Heart left ventricle (tissue), 16 donors: ENCODE measurements at regions of chr11 and their contacts with region 1.

Region 1: GRCh38 chr11:35822815-35823495 is 120.9 kb upstream of the LDLRAD3 start:
- DNase-seq: no peak
- ATAC-seq: no peak
- H3K4me3 ChIP-seq: no peak overlapping the region
- H3K27ac ChIP-seq: no peak overlapping the region
- H3K4me1 ChIP-seq: peaks cover 0 to 31% (median 14%) of the 10 kb centered on the region in 12 donors
- H3K27me3 ChIP-seq: no peaks in the 10 kb centered on the region
- CTCF ChIP-seq: no peak
- POLR2A ChIP-seq: no peak

Region 2: DNA sequence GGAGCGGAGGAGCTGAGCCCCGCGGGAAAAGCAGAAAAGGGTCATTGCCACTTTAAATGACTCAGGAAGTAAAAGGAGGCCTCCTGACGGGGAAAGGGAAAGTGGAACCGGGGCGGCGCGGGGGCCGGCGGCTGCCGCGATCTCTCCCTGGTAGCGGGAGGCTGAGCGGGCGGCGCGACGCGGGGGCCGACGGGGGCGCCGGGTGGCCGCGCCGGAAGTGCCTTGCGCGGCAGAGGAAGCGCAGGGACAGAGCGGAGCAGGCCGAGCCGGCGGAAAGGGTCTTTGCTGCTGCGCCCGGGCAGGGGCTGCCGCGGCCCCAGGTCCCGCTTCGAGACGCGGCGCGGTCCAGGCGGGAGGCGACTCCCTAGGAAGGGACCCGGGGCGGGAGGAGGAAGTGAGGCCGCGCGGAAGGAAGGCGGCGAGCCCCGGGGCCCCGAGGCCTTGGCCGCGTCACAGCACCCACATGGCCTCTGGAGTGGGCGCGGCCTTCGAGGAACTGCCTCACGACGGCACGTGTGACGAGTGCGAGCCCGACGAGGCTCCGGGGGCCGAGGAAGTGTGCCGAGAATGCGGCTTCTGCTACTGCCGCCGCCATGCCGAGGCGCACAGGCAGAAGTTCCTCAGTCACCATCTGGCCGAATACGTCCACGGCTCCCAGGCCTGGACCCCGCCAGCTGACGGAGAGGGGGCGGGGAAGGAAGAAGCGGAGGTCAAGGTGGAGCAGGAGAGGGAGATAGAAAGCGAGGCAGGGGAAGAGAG is 160.1 kb before region 1 on chr11 and contains the start of gene TRIM44:
- intact Hi-C with region 1: loop called in 5 of 10 experiments (anchors 2 to 10 kb)
- DNase-seq: peak; percentile 87 to 92 (median 89)
- ATAC-seq: peak; percentile 91 to 97 (median 95)
- H3K4me3 ChIP-seq: peak within 1 kb of the TSS; percentile 56 to 92 (median 78)
- H3K27ac ChIP-seq: peak within 1 kb of the TSS; percentile 89 to 99 (median 96)
- H3K4me1 ChIP-seq: peaks cover 0 to 31% (median 21%) of the 10 kb centered on the region in 12 donors
- H3K27me3 ChIP-seq: peaks cover 0 to 2% (median 0%) of the 10 kb centered on the region in 9 donors
- CTCF ChIP-seq: no peak
- POLR2A ChIP-seq: peak in 1 of 2 donors; percentile 70
- total RNA-seq, gene TRIM44: 34.5 to 55.3 (median 48.0) TPM

Region 3: DNA sequence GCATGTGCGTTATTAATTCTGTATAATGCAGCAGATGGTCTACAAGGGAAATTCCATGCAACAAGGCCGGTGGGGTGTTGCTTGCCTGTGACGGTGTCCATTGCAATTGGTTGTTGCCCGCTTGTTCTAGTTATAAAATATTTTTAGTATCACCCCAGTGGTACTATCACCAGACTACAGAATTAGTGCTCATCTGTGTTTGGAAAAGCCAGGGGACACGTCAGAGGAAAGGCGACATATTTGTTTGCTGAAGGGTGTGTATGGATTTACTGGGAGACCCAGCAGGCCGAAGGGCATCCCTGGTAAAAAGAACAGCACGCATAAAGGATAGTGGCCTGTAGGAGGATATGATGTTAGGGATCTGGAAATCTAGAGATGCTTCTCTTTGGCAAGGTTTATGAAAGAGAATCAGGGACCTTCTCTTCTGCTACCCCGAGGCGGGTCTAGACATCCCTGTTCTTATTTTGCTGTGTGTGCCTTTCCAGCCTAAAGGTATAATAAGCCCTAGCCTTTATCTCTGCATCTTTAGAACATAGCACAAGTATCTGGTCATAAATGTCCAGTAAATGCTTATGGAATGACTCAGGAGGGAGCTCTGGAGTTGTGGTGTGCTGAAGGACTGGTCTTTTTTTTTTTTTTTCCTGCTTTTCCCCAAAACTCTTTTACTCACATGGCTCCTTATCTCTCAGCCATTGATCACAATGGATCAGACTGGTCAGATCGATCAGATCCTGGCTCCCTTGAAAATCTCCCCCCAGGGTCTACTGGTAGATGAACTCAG is 211.8 kb after region 1 on chr11:
- intact Hi-C with region 1: loop called in 2 of 10 experiments (anchors 10 kb)
- DNase-seq: no peak
- ATAC-seq: no peak
- H3K4me3 ChIP-seq: no peak overlapping the region
- H3K27ac ChIP-seq: no peak overlapping the region
- H3K4me1 ChIP-seq: peaks cover 0 to 25% (median 7%) of the 10 kb centered on the region in 12 donors
- H3K27me3 ChIP-seq: no peaks in the 10 kb centered on the region
- CTCF ChIP-seq: no peak
- POLR2A ChIP-seq: no peak

Region 4: GRCh38 chr11:36123346-36124101 is 300.6 kb after region 1 on chr11:
- intact Hi-C with region 1: loop called in 1 of 10 experiments (anchors 5 kb)
- DNase-seq: no peak
- ATAC-seq: no peak
- H3K4me3 ChIP-seq: no peak overlapping the region
- H3K27ac ChIP-seq: no peak overlapping the region
- H3K4me1 ChIP-seq: no peaks in the 10 kb centered on the region
- H3K27me3 ChIP-seq: peaks cover 0 to 8% (median 0%) of the 10 kb centered on the region in 9 donors
- CTCF ChIP-seq: no peak
- POLR2A ChIP-seq: no peak

Region 5: GRCh38 chr11:36478700-36479329 is 655.9 kb after region 1 on chr11:
- intact Hi-C with region 1: loop called in 2 of 10 experiments (anchors 10 kb)
- DNase-seq: peak in 1 of 5 donors; percentile 30
- ATAC-seq: peak in 3 of 4 donors; percentile 70 to 80 (median 78)
- H3K4me3 ChIP-seq: no peak overlapping the region
- H3K27ac ChIP-seq: no peak overlapping the region
- H3K4me1 ChIP-seq: peaks cover 0 to 17% (median 5%) of the 10 kb centered on the region in 12 donors
- H3K27me3 ChIP-seq: no peaks in the 10 kb centered on the region
- CTCF ChIP-seq: peak; percentile 25 to 77 (median 62)
- POLR2A ChIP-seq: no peak